Activated CD8-positive, alpha-beta memory T cell treated with anti-CD3 and anti-CD28 coated beads, Interleukin-2, amount 10 ng/mL, durations not matched to agents 7 days and 5 days (primary cell): ENCODE measurements at regions of chr5 and their contacts with region 1.

Region 1: GRCh38 chr5:132500931-132501630 is 10.5 kb upstream of the IRF1 start:
- DNase-seq: peak; percentile 84
- ATAC-seq: peak; percentile 25
- H3K4me3 Mint-ChIP-seq: no peak overlapping the region
- H3K27ac Mint-ChIP-seq: peak overlapping the region; percentile 67
- H3K4me1 Mint-ChIP-seq: peaks cover 43% of the 10 kb centered on the region
- H3K27me3 Mint-ChIP-seq: peaks cover 2% of the 10 kb centered on the region

Region 2: GRCh38 chr5:132238169-132238744 is 262.8 kb before region 1 on chr5:
- CTCF ChIA-PET with region 1: interaction called, 11 read pairs
- DNase-seq: peak; percentile 86
- ATAC-seq: peak; percentile 83
- H3K4me3 Mint-ChIP-seq: no peak overlapping the region
- H3K27ac Mint-ChIP-seq: no peak overlapping the region
- H3K4me1 Mint-ChIP-seq: peaks cover 2% of the 10 kb centered on the region
- H3K27me3 Mint-ChIP-seq: peaks cover 3% of the 10 kb centered on the region

Region 3: DNA sequence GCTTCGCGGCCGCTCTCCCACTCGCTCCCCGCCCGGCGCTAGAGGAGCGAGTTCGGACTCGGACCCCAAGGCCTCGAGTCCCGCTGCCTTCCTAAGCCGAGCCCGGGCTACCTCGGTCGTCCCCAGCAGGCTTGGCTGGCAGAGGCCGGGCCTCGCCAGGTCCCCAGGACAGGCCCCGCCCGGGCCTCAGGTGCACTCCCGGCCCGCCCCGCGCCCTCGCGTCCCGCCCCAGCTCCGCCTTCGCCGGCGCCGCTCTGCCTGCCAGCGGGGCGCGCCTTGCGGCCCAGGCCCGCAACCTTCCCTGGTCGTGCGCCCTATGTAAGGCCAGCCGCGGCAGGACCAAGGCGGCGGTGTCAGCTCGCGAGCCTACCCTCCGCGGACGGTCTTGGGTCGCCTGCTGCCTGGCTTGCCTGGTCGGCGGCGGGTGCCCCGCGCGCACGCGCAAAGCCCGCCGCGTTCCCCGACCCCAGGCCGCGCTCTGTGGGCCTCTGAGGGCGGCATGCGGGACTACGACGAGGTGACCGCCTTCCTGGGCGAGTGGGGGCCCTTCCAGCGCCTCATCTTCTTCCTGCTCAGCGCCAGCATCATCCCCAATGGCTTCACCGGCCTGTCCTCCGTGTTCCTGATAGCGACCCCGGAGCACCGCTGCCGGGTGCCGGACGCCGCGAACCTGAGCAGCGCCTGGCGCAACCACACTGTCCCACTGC is 131.5 kb before region 1 on chr5 and contains the start of gene SLC22A5:
- CTCF ChIA-PET with region 1: interaction called, 10 read pairs
- DNase-seq: peak; percentile 73
- ATAC-seq: peak; percentile 97
- H3K4me3 Mint-ChIP-seq: peak within 1 kb of the TSS; percentile 75
- H3K27ac Mint-ChIP-seq: peak within 1 kb of the TSS; percentile 52
- H3K4me1 Mint-ChIP-seq: peaks cover 20% of the 10 kb centered on the region
- H3K27me3 Mint-ChIP-seq: no peaks in the 10 kb centered on the region
- total RNA-seq, gene SLC22A5: 3.9 to 4.5 TPM

Region 4: DNA sequence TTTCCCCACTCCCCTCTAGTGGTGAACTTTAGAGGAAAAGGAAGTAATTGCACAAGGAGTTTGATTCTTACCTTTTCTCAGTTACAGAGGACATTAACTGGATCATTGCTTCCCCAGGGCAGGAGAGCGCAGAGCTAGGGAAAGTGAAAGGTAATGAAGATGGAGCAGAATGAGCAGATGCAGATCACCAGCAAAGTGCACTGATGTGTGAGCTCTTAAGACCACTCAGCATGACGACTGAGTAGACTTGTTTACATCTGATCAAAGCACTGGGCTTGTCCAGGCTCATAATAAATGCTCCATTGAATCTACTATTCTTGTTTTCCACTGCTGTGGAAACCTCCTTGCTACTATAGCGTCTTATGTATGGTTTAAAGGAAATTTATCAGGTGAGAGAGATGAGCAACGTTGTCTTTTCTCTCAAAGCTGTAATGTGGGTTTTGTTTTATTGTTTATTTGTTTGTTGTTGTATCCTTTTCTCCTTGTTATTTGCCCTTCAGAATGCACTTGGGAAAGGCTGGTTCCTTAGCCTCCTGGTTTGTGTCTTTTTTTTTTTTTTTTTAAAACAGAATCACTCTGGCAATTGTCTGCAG is 106.3 kb before region 1 on chr5:
- CTCF ChIA-PET with region 1: interaction called, 328 read pairs
- DNase-seq: no peak
- ATAC-seq: no peak
- H3K4me3 Mint-ChIP-seq: no peak overlapping the region
- H3K27ac Mint-ChIP-seq: no peak overlapping the region
- H3K4me1 Mint-ChIP-seq: peaks cover 41% of the 10 kb centered on the region
- H3K27me3 Mint-ChIP-seq: no peaks in the 10 kb centered on the region

Region 5: DNA sequence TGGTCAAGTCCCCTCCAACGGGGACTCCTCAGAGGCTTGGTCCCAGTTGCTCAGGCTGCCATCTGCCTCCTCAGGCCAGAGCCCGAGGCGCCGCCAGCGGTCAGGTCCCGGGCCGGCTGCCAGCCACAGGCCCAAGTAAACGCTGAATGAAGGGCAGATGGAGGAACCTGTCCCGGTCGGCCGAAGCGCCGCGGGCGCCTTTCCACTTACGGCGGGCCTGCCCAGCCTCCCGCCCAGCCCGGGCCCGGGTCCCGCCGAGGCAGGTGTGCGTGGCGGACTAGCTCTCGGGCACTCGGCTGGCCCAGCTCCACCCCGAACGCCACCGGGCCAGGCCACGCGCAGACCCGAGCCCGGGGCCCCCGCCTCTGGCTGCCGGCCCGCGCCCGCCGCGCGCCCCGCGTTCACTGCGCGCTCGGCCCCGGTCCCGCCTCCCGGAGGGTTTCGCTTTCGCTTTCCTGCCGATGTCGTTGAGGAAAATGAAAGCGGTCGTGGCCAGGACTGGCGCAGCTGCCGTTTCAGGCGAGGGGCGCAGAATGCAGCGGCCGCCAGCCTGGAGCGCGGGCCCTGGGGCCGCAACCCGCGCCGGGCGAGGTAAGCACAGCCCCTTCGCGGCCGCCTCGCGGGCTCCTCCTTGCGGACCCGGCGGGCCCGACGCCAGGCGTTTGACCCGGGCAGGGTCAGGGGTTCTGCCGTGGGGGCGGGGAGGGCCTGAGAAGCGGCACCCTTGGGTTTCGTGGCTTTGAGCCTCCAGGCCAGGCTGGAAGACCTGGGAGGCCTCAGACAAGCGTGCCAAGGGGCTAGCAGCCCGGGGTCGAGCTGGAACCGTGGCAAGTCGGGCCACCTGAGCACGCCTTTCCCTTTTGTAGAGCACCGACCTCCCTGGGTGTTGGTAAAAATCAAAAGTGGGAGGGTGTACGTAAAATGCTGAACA is 90.4 kb before region 1 on chr5:
- CTCF ChIA-PET with region 1: interaction called, 15 read pairs
- DNase-seq: peak; percentile 91
- ATAC-seq: peak; percentile 79
- H3K4me3 Mint-ChIP-seq: peak overlapping the region; percentile 97
- H3K27ac Mint-ChIP-seq: peak overlapping the region; percentile 99
- H3K4me1 Mint-ChIP-seq: peaks cover 58% of the 10 kb centered on the region
- H3K27me3 Mint-ChIP-seq: no peaks in the 10 kb centered on the region

Region 6: GRCh38 chr5:132473019-132473531 is 28.0 kb before region 1 on chr5:
- CTCF ChIA-PET with region 1: interaction called, 23 read pairs
- DNase-seq: peak; percentile 96
- ATAC-seq: peak; percentile 90
- H3K4me3 Mint-ChIP-seq: peak overlapping the region; percentile 6
- H3K27ac Mint-ChIP-seq: peak overlapping the region; percentile 89
- H3K4me1 Mint-ChIP-seq: peaks cover 91% of the 10 kb centered on the region
- H3K27me3 Mint-ChIP-seq: no peaks in the 10 kb centered on the region

Region 7: DNA sequence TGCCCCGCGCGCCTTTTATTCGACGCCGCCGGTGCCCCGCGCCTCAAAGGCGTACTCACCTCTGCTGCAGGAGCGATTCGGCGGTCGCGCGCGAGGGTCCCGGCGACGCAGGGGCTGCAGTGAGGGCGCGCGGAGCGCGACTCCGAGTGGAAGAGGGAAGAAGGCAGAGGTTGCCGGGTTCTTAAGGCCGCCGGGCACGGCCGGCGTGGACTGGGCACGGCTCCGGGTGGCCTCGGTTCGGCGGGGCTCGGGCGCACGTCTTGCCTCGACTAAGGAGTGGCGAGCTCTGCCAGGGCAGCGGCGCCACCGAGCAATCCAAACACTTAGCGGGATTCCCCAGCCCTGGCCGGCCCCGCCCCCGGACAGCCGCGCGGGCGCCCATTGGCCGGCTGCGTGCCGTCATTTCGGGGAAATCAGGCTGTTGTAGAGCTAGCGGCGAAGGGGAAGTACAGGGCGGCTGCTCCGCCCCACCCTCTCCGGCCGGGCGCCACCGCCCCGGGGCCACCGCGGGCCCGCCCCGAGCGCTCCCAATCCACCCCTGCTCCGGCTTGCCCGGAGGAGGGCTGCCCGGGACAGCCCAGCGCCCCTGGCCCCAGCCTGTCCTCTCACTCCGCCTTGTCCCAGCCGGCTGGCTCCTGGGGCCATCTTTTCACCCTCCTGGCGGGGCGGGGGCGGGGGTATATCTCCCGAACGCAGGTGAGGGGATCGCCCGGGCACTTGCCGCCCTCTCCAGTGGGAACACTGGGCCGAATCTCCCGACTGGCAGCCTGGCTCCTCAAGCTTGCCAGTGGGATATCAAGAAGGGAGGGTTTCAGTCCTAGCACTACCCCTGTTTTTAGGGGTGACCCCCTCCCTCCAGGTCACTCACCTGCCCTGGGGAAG is 10.4 kb before region 1 on chr5 and contains the start of gene IRF1:
- CTCF ChIA-PET with region 1: interaction called, 18 read pairs
- DNase-seq: peak; percentile 98
- ATAC-seq: peak; percentile 79
- H3K4me3 Mint-ChIP-seq: peak within 1 kb of the TSS; percentile 95
- H3K27ac Mint-ChIP-seq: peak within 1 kb of the TSS; percentile 97
- H3K4me1 Mint-ChIP-seq: peaks cover 66% of the 10 kb centered on the region
- H3K27me3 Mint-ChIP-seq: no peaks in the 10 kb centered on the region
- total RNA-seq, gene IRF1: 205 to 223 TPM

Region 8: GRCh38 chr5:133081703-133082102 is 580.6 kb after region 1 on chr5:
- CTCF ChIA-PET with region 1: no interaction called
- DNase-seq: no peak
- ATAC-seq: no peak
- H3K4me3 Mint-ChIP-seq: no peak overlapping the region
- H3K27ac Mint-ChIP-seq: peak overlapping the region; percentile 70
- H3K4me1 Mint-ChIP-seq: peaks cover 22% of the 10 kb centered on the region
- H3K27me3 Mint-ChIP-seq: no peaks in the 10 kb centered on the region